ENCODE measurements at regions of chr3 and their contacts with region 1.

Region 1: DNA sequence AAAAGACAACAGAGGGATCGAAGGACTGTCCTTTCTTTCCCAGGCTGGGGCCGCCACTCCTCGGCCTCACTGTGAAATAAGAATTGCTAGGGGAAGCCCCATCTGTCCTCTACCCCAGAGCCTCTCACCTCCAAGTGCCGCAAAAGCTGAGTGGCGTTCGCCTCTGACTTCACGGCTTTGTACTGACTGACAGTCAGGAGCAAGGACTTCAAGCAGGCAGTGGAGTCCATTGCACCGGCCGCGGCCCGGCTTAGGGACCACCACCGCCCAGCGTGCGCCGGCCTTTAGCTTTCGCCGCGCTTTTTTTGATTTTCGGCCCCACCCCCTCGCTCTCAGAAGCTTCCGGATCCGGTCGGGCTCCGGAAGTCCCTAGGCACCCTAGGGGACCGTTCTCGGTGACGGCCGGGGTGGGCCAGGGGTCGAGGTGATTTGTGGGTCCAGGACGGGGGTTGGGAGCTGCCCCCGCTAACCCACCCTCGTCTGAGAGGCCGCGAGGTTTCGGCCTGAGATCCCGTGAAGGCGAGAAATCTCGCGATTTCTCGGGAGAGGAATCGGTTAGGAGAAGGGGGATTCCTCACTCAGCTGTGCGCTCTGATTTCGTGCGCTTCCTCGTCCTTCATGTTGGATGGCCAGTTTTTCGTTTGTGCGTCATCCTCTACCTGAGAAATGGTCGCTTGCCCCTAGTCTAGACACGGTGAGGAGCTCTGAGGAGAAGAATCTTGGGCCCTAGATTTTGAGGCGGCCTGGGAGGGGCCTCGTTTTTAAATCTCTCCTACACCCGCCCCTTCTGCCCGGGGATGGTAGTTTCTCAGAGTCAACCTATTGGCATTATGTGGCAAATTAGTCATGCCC is at the starts of genes CIP2A and DZIP3:
- DNase-seq: peak; percentile 85 to 93 (median 89)
- H3K4me3 ChIP-seq: peak within 1 kb of the TSS; percentile 80 to 98
- H3K4me3 Mint-ChIP-seq: peak within 1 kb of the TSS; percentile 92 to 98 (median 97)
- H3K27ac ChIP-seq: peak within 1 kb of the TSS; percentile 92
- H3K27ac Mint-ChIP-seq: peak within 1 kb of the TSS; percentile 97 to 100 (median 99)
- H3K4me1 ChIP-seq: peaks cover 28% of the 10 kb centered on the region
- H3K4me1 Mint-ChIP-seq: peaks cover 15 to 38% (median 25%) of the 10 kb centered on the region in 4 donors
- H3K27me3 ChIP-seq: no peaks in the 10 kb centered on the region
- H3K27me3 Mint-ChIP-seq: no peaks in the 10 kb centered on the region
- total RNA-seq, gene CIP2A: 3.4 to 3.9 TPM
- total RNA-seq, gene DZIP3: 15.3 to 18.5 TPM

Region 2: GRCh38 chr3:107522510-107523288 is 1066.7 kb before region 1 on chr3 and contains the start of gene BBX:
- CTCF ChIA-PET with region 1: no interaction called
- POLR2A ChIA-PET with region 1: interaction called, 6 read pairs
- intact Hi-C with region 1: loop called (anchors 5 kb)
- DNase-seq: peak; percentile 92 to 98 (median 96)
- H3K4me3 ChIP-seq: peak within 1 kb of the TSS; percentile 70 to 88
- H3K4me3 Mint-ChIP-seq: peak within 1 kb of the TSS; percentile 97 to 99 (median 98)
- H3K27ac ChIP-seq: peak within 1 kb of the TSS; percentile 87
- H3K27ac Mint-ChIP-seq: peak within 1 kb of the TSS; percentile 88 to 98 (median 97)
- H3K4me1 ChIP-seq: peaks cover 29% of the 10 kb centered on the region
- H3K4me1 Mint-ChIP-seq: peaks cover 21 to 29% (median 25%) of the 10 kb centered on the region in 4 donors
- H3K27me3 ChIP-seq: no peaks in the 10 kb centered on the region
- H3K27me3 Mint-ChIP-seq: no peaks in the 10 kb centered on the region
- total RNA-seq, gene BBX: 93.9 to 99.1 TPM

Region 3: DNA sequence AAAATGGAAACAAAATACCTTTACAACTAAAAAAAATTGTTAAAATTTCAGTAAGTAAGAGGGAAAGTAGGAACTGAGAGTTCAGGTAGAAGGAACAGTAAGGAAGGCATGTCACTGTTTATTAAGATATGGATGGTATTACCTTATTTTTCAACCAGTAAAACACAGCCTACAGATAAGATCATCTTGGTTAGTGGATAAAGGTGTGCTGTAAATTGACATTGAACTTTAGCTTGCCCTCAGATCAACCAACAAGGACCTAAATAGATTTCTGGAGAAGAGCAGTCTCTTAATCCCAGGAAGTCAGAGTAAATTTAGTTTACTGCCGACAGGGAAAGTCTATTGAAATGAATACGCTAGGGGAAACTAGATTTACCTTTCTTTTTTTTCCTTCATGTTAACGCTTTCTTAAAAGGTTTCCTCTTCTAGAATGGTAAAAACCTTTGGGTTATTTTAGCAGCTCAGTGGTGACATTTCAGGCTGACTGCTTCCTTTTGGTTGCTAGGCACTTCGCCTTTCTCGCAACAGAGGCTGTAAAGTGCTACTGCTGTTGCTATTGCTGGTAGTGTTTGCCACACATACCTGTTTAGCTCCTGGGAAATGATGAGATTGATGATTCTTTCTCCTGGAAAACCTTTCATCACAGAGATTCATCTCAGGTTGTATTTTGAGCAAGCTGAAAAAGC is 13.0 kb after region 1 on chr3:
- CTCF ChIA-PET with region 1: interaction called, 67 read pairs
- POLR2A ChIA-PET with region 1: interaction called, 298 read pairs
- intact Hi-C with region 1: loop called (anchors 1 kb)
- DNase-seq: peak; percentile 38 to 63 (median 50)
- H3K4me3 ChIP-seq: peak overlapping the region in 1 of 2 donors; percentile 27
- H3K4me3 Mint-ChIP-seq: peak overlapping the region; percentile 54 to 86 (median 82)
- H3K27ac ChIP-seq: peak overlapping the region; percentile 56
- H3K27ac Mint-ChIP-seq: peak overlapping the region; percentile 63 to 99 (median 91)
- H3K4me1 ChIP-seq: peaks cover 59% of the 10 kb centered on the region
- H3K4me1 Mint-ChIP-seq: peaks cover 37 to 68% (median 43%) of the 10 kb centered on the region in 4 donors
- H3K27me3 ChIP-seq: no peaks in the 10 kb centered on the region
- H3K27me3 Mint-ChIP-seq: no peaks in the 10 kb centered on the region

Region 4: DNA sequence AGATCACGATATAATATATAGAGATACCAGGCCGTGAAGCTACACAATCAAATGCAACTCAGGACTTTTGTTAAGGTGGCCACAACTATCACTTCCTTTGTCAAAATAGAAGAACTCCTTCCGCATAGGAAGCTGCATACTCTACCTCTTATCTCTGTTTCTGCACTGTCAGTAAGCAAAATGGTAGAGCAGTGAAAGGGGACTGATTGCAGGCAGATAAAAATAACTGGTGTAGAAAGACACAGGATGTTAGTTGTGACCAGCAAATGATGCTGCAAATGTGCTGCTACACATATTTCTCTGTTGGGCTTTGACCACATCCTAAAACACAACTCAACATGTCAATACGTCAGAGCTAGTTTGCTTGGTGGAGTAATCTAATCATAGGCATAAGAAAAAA is 216.9 kb after region 1 on chr3:
- CTCF ChIA-PET with region 1: no interaction called
- POLR2A ChIA-PET with region 1: interaction called, 11 read pairs
- intact Hi-C with region 1: no loop called
- DNase-seq: peak; percentile 80 to 90 (median 83)
- H3K4me3 ChIP-seq: no peak overlapping the region
- H3K4me3 Mint-ChIP-seq: peak overlapping the region in 7 of 8 donors; percentile 4 to 73 (median 57)
- H3K27ac ChIP-seq: peak overlapping the region; percentile 35
- H3K27ac Mint-ChIP-seq: peak overlapping the region; percentile 79 to 93 (median 91)
- H3K4me1 ChIP-seq: peaks cover 18% of the 10 kb centered on the region
- H3K4me1 Mint-ChIP-seq: peaks cover 15 to 27% (median 21%) of the 10 kb centered on the region in 4 donors
- H3K27me3 ChIP-seq: no peaks in the 10 kb centered on the region
- H3K27me3 Mint-ChIP-seq: no peaks in the 10 kb centered on the region

Measured in CD4-positive, alpha-beta memory T cell (primary cell).